ENCODE measurements at regions of chr3 and their contacts with region 1.

Region 1: GRCh38 chr3:139620438-139620837 is 57.3 kb downstream of the NMNAT3 start:
- DNase-seq: no peak
- ATAC-seq: no peak
- H3K4me3 ChIP-seq: no peak overlapping the region
- H3K27ac ChIP-seq: no peak overlapping the region
- H3K4me1 ChIP-seq: no peaks in the 10 kb centered on the region
- H3K27me3 ChIP-seq: no peaks in the 10 kb centered on the region
- CTCF ChIP-seq: no peak

Region 2: DNA sequence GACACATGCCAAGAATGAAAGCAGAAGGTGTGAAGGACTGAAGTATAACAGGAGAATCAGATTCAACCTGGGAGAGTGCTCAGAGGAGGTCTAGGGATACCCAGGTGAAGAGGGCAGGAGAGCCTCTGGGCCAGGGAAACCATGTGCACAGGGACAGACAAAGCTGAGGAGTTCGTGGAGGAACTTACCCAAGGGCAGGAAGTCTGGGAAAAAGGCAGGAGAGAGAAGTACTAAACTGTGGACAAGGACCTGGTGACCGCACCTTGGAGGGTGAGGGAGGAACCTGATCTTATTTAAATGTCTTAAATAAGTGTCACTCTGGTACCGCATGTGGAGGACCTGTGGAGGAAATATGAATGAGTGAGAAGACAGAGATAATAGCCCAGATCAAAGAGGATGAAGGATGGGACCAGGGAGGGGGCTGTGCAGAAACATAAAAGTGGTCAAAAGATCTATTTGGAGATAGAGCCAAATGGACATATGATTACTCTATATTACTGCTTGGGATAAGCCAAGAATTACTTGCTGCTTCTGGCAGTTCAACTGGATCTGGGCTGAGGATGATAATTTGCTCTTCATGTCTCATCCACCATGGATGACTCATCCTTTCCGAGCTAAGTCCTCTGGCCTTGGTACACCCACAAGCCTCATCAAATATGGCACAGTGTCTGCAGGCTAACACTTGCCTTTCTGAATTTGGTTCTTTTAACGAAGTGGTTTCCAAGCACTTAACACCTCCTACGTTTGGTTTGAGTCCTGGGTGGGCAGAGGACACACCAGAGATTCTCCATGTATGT is 174.2 kb after region 1 on chr3:
- intact Hi-C with region 1: loop called in 1 of 2 experiments (anchors 5 kb)
- DNase-seq: no peak
- ATAC-seq: no peak
- H3K4me3 ChIP-seq: no peak overlapping the region
- H3K27ac ChIP-seq: no peak overlapping the region
- H3K4me1 ChIP-seq: no peaks in the 10 kb centered on the region
- H3K27me3 ChIP-seq: no peaks in the 10 kb centered on the region
- CTCF ChIP-seq: no peak

Region 3: GRCh38 chr3:139953131-139953910 is 332.9 kb after region 1 on chr3:
- intact Hi-C with region 1: no loop called
- DNase-seq: no peak
- ATAC-seq: no peak
- H3K4me3 ChIP-seq: no peak overlapping the region
- H3K27ac ChIP-seq: no peak overlapping the region
- H3K4me1 ChIP-seq: no peaks in the 10 kb centered on the region
- H3K27me3 ChIP-seq: no peaks in the 10 kb centered on the region
- CTCF ChIP-seq: no peak

Measured in left lung (tissue), 14 donors.